PC-9 (cell line): ENCODE measurements at regions of chr5 and their contacts with region 1.

Region 1: DNA sequence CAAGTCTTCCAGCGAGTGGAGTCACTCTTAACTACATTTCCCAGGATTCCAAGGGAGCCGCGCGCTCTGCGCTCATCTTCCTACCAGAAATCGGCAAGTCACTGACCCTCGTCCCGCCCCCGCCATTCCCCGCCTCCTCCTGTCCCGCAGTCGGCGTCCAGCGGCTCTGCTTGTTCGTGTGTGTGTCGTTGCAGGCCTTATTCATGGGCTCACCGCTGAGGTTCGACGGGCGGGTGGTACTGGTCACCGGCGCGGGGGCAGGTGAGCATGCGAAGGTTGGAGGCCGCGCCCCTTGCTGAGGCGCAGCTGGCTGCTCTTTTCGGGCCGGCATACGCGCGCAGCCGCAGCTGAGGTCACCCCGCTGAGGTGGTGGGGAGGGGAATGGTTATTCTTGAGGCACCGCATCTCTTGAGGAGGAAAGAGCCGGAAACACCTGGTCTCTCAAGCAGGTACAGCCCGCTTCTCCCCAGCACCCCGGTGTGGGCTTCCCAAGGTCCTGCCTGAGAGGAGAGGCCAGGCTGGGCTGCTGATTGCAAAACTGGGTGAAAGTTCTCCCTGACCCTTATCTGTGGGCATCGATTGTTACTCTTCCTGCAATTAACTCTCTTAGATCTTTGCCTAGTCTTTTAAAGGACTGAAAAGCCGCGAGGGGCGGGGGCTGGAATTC is at the start of gene HSD17B4:
- DNase-seq: peak; percentile 76 to 82
- H3K4me3 ChIP-seq: peak within 1 kb of the TSS; percentile 79
- H3K27ac ChIP-seq: peak within 1 kb of the TSS; percentile 78
- H3K4me1 ChIP-seq: peaks cover 9% of the 10 kb centered on the region
- H3K27me3 ChIP-seq: no peaks in the 10 kb centered on the region
- CTCF ChIP-seq: no peak
- total RNA-seq, gene HSD17B4: 148 and 226 TPM in 2 replicates

Region 2: DNA sequence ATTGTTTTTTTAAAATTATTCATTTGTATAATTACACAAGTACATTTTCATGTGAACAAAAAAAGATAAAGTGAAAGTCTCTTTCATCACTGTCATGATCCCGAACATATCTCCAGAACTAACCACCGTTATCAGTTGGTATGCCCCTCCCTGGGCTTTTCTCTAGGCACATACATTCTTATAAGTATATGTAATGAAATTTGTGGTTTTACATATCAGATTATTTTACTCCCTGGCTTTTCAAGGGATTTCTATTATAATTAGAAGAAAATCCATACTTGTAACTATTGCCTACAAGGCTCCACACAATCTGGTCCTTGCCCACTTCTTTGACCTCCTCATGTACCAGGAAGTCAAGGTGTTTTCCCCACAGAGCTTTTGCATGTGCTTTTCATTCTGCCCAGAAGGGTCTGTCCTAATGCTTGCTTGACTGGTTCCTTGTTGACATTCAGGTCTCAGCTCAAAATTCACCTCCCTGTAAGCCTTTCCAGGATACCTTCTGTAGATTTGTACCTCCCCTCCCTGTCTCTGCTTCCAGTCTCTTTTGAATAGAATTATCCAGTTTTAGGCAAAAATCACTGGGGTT is 33.9 kb before region 1 on chr5:
- CTCF ChIA-PET with region 1: no interaction called
- POLR2A ChIA-PET with region 1: no interaction called
- intact Hi-C with region 1: loop called (anchors 2 kb)
- DNase-seq: peak; percentile 31 to 65
- H3K4me3 ChIP-seq: no peak overlapping the region
- H3K27ac ChIP-seq: no peak overlapping the region
- H3K4me1 ChIP-seq: peaks cover 28% of the 10 kb centered on the region
- H3K27me3 ChIP-seq: no peaks in the 10 kb centered on the region
- CTCF ChIP-seq: no peak

Region 3: DNA sequence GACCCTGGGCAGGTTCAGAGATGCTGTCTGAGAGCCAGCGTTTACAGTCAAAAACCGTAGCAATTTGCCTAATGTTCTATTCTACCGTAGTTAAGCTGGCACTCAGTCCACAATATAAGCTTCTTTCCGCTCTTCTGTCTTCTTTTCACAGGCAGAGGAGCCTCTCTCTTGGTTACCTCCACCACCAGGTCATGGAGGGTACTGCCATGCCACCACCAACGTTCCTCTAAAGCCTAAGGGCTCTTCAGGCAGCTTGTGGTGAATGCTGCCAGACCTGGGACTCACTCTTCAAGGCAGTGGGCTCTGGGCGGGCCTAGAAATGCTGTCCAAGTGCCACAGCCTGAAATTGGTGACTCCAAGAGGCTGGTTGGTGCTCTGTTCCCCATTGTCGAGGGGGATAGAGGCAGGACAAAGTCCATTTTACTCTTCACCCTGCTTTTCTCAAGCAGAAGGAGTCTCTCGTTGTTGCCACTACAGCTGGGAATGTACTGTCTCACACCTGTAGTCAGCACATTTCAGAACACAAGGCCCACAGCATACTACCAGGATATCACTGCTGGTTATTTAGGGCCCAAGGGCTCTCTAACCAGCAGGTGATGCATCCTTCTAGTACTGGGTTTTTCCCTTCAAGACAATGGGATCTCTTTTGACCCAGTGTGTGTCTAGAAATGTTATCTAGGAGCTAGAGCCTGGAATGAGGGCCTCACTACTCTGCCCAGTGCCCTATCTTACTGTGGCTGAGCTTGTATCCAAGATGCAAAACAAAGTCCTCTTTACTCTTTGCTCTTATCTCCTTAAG is 776.3 kb after region 1 on chr5:
- CTCF ChIA-PET with region 1: no interaction called
- POLR2A ChIA-PET with region 1: no interaction called
- intact Hi-C with region 1: no loop called
- DNase-seq: no peak
- H3K4me3 ChIP-seq: no peak overlapping the region
- H3K27ac ChIP-seq: no peak overlapping the region
- H3K4me1 ChIP-seq: no peaks in the 10 kb centered on the region
- H3K27me3 ChIP-seq: no peaks in the 10 kb centered on the region
- CTCF ChIP-seq: no peak